Aorta (tissue), 5 donors: ENCODE measurements at regions of chr6 and their contacts with region 1.

Region 1: DNA sequence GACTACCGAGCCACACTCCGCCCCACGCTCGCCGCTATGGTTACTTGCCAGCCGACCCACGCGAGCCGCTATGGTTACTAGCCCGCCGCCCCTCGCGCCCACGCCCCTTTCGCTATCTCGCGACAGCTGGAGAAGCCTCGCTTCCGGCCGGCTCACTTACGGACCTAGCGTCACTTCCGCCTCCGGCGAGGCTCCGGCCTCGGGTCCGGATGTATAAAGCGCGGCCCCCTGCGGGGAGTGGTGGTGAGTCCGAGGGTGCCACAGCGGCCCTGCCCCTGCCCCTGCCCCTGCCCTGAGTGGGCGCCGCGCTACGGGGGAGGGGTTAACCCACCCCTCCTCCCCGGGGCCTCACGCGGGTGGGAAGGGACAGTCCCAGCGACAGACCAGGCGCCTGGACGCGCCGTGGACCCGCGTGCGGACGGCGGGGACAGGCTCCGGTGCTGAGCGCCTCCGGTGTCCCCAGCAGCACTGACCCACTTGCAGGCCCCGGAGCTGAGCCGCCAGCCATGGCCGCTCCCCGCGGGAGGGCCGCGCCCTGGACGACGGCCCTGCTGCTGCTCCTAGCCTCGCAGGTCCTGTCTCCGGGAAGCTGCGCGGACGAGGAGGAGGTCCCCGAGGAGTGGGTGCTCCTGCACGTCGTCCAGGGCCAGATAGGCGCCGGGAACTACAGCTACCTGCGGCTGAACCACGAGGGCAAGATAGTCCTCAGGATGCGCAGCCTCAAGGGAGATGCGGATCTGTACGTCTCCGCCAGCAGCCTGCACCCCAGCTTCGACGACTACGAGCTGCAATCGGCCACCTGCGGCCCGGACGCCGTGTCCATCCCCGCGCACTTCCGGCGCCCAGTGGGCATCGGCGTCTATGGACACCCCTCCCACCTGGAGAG is at the starts of genes C6orf120 and WDR27:
- DNase-seq: peak; percentile 98 to 100
- ATAC-seq: peak; percentile 99
- H3K4me3 ChIP-seq: peak within 1 kb of the TSS; percentile 59 to 85
- H3K27ac ChIP-seq: peak within 1 kb of the TSS; percentile 63 to 77
- H3K4me1 ChIP-seq: no peaks in the 10 kb centered on the region
- H3K27me3 ChIP-seq: no peaks in the 10 kb centered on the region
- total RNA-seq, gene C6orf120: 18.3 to 20.6 TPM
- total RNA-seq, gene WDR27: 30.0 to 50.7 TPM

Region 2: DNA sequence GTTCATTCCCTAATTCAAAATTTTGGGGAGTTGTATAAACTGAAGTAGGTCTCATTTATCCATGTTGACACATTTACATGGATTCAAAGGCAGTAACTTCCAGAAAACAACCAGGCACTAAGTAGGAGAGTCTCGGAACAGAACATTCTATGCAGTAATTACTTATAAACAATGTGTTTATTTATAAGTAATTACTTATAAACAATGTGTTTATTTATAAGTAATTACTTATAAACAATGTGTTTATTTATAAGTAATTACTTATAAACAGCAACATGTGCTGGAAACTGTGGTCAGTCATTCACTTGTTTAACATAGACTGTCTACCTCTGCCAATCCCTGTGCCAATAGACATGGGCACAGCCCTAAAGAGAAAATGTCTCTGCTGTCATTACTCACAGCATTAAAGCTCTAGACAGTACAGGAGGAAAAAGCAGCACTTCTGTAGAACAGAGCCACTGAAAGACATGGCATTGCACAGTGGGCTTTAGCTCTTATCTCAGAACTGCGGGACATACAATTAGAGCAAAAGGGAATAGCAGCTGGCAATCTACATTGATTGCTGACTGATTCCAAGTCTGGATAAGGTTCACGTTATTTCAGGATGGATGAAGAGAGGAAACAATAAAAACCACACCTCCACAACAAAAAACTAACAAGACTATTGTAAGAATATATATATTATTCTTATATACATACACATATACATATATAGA is 188.6 kb before region 1 on chr6:
- intact Hi-C with region 1: no loop called
- DNase-seq: no peak
- ATAC-seq: no peak
- H3K4me3 ChIP-seq: no peak overlapping the region
- H3K27ac ChIP-seq: no peak overlapping the region
- H3K4me1 ChIP-seq: no peaks in the 10 kb centered on the region
- H3K27me3 ChIP-seq: no peaks in the 10 kb centered on the region

Region 3: GRCh38 chr6:169723200-169723909 is 21.2 kb after region 1 on chr6:
- intact Hi-C with region 1: loop called in 1 of 2 experiments (anchors 2 kb)
- DNase-seq: peak; percentile 87 to 94
- ATAC-seq: peak; percentile 83
- H3K4me3 ChIP-seq: peak overlapping the region; percentile 43 to 91
- H3K27ac ChIP-seq: peak overlapping the region; percentile 94 to 99
- H3K4me1 ChIP-seq: no peaks in the 10 kb centered on the region
- H3K27me3 ChIP-seq: no peaks in the 10 kb centered on the region

Region 4: DNA sequence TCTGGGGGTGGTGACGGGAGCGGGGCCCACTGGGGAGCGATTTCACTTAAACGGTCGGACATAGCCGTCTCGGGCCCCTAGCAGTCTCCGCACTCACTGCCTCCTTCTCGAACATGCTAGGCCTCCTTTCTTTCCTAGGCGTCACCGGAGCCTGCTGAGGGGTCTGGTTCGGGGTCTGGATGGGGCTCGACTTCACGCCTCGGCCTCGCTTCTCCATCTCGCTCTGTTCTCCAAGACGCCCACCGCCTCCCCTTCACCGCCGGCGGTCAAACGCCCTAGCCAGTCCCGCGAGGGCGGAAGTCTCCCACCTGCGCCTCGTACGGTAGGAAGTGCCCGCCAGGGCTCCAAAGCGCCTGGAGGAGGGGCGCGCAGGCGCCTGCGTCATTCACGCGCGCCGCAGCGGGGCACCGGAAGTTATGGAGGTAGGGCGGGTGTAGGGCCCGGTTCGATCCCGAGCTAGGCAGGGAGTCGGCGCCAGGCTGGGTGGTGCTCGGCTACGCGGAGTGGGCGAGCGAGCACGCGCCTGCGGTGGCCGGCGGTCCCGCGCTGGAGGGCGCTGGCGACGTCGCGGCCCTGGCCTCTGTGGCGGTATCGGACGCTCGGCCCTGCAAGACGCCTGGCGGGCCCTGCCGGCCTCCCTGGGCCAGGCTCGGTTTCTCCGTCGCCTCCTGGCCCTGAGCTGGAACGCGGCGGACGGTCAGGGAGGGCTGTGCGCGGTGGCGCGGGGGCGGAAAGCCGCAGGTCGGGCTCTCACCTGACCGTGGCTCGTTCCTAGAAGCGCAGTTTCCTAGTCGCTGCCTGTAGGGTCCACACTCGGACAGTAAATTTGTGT is 49.3 kb after region 1 on chr6 and contains the starts of genes DYNLT2 and ERMARD:
- intact Hi-C with region 1: loop called (anchors 1 to 10 kb)
- DNase-seq: peak; percentile 95 to 98
- ATAC-seq: peak; percentile 100
- H3K4me3 ChIP-seq: peak within 1 kb of the TSS; percentile 46 to 94
- H3K27ac ChIP-seq: peak within 1 kb of the TSS; percentile 78 to 94
- H3K4me1 ChIP-seq: peaks cover 1 to 6% of the 10 kb centered on the region in 2 donors
- H3K27me3 ChIP-seq: no peaks in the 10 kb centered on the region
- total RNA-seq, gene DYNLT2: 1.2 to 2.8 TPM
- total RNA-seq, gene ERMARD: 15.0 to 29.3 TPM